Right cardiac atrium (tissue), 5 donors: ENCODE measurements at regions of chr12 and their contacts with region 1.

Region 1: GRCh38 chr12:63802012-63802608 is 22.4 kb downstream of the RXYLT1 start:
- DNase-seq: no peak
- ATAC-seq: no peak
- H3K4me3 ChIP-seq: no peak overlapping the region
- H3K27ac ChIP-seq: no peak overlapping the region
- H3K4me1 ChIP-seq: no peaks in the 10 kb centered on the region
- H3K27me3 ChIP-seq: no peaks in the 10 kb centered on the region

Region 2: GRCh38 chr12:63103494-63104131 is 698.5 kb before region 1 on chr12:
- intact Hi-C with region 1: loop called in 2 of 4 experiments (anchors 10 kb)
- DNase-seq: no peak
- ATAC-seq: no peak
- H3K4me3 ChIP-seq: no peak overlapping the region
- H3K27ac ChIP-seq: no peak overlapping the region
- H3K4me1 ChIP-seq: no peaks in the 10 kb centered on the region
- H3K27me3 ChIP-seq: no peaks in the 10 kb centered on the region